ENCODE measurements at regions of chr6 and their contacts with region 1.

Region 1: GRCh38 chr6:111709615-111710398 is 104.1 kb upstream of the TRAF3IP2 start:
- DNase-seq: peak; percentile 25
- H3K4me3 ChIP-seq: peak overlapping the region in 2 of 3 experiments; percentile 31 to 49
- H3K27ac ChIP-seq: peak overlapping the region; percentile 6
- H3K4me1 ChIP-seq: peaks cover 5% of the 10 kb centered on the region
- H3K27me3 ChIP-seq: no peaks in the 10 kb centered on the region
- CTCF ChIP-seq: peak; percentile 38 to 55 (median 43)

Region 2: DNA sequence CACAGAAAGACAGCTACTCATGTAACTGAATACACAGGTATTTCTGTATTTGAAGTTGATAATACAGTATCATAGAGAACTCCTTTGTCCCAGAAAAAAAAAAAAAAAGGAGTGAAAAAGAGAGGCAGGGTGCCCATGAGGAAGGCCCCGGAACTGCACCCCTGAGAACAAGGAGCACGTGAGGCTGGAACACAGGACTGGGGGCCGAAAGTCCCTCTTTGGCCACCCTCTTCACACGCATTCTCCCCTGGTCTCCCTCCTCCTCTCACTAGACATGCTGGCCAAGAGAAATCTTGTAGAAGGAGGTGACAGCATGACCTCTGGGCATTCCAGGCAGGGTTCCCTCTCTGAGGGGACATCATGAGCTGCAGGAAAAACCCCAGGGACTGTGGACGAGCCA is 41.4 kb before region 1 on chr6:
- dilution Hi-C with region 1: no loop called
- DNase-seq: no peak
- H3K4me3 ChIP-seq: no peak overlapping the region
- H3K27ac ChIP-seq: no peak overlapping the region
- H3K4me1 ChIP-seq: no peaks in the 10 kb centered on the region
- H3K27me3 ChIP-seq: no peaks in the 10 kb centered on the region
- CTCF ChIP-seq: peak in 2 of 3 experiments; percentile 27 to 31

Region 3: DNA sequence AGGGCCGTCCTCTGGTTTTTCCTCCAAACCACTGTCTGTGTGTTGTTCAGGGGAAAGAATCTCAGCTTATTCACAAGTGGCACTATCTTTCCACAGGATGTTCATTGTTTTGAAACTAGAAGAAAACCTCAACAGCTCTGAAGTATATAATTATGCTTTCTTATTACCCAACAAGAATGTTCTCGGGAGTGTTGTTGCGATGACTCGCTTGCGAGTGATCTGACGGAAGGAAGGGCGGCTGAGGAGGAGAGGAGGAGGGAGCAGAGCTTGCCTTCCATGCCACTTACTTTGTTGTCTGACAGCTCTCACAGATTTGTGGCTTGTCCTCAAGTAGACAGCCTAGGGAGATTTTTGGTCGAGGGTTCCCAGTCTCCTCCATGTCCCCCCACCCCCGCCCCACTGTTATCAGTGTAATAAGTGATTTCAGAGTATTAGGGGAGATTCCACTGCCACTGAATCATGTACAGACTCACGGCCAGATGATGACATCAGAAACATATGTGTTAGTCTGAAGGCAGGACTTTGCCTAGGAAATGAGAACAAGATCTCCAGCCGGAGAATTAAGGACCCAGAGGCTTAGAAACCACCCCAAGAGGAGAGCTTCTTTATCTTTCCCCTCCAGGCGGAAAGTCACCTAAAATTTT is 263.4 kb after region 1 on chr6:
- dilution Hi-C with region 1: loop called (anchors 25 kb)
- DNase-seq: no peak
- H3K4me3 ChIP-seq: peak overlapping the region; percentile 9 to 58 (median 42)
- H3K27ac ChIP-seq: peak overlapping the region; percentile 99
- H3K4me1 ChIP-seq: peaks cover 35% of the 10 kb centered on the region
- H3K27me3 ChIP-seq: no peaks in the 10 kb centered on the region
- CTCF ChIP-seq: no peak

Measured in keratinocyte (primary cell).